ENCODE measurements at regions of chr2 and their contacts with region 1.

Region 1: DNA sequence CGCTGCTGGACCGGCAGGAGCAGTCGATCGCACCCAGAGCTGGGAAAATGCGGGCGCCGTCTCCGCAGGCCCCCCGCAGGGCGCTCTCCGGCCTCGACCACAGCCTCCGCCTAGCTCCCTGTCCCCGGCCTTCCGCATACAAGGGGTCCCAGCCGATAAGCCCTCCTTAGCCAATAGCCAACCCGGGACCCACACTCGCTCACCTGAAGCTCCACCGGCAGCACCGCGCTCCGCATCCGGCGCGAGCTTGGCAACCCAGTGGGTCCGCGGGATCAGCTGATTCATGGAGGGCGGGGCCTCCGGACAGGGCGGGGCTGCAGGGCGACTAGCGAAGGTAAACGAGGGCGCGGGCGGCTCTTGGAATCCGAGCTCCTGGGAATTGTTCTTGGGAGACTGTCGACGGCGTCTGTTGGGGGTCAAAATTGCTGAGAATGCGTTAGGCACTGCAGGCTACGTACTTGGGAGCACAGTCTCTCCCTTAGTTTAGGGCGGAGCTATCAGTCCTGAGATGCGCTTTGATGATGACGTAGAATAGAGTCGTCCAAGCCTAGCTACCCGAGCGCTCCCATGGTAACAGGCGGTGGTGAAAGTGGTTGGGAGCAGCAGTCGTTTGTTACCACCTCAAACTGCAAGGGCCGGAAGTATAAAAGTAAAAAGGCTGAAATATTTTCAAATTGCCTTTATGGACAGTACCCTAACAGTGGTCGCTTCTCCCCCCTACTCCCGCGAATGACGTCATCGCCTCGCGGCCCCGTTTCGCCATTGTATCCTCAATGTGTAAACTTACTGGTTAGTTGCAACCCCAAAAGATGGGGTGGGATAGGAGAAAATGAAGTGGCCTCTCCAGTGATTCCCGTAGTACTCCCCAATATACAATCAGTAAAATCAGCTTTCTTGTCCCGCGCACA is at the start of gene ALS2:
- DNase-seq: peak; percentile 96
- H3K4me3 Mint-ChIP-seq: peak within 1 kb of the TSS; percentile 98
- H3K27ac Mint-ChIP-seq: peak within 1 kb of the TSS; percentile 93
- H3K4me1 Mint-ChIP-seq: peaks cover 15% of the 10 kb centered on the region
- H3K27me3 Mint-ChIP-seq: peaks cover 3% of the 10 kb centered on the region
- total RNA-seq, gene ALS2: 11.0 to 12.6 TPM

Region 2: GRCh38 chr2:201768918-201769317 is 12.0 kb before region 1 on chr2:
- CTCF ChIA-PET with region 1: no interaction called
- POLR2A ChIA-PET with region 1: no interaction called
- intact Hi-C with region 1: no loop called
- DNase-seq: no peak
- H3K4me3 Mint-ChIP-seq: no peak overlapping the region
- H3K27ac Mint-ChIP-seq: no peak overlapping the region
- H3K4me1 Mint-ChIP-seq: peaks cover 1% of the 10 kb centered on the region
- H3K27me3 Mint-ChIP-seq: no peaks in the 10 kb centered on the region

Region 3: GRCh38 chr2:202033321-202034248 is 252.7 kb after region 1 on chr2 and contains the start of gene FZD7:
- CTCF ChIA-PET with region 1: no interaction called
- POLR2A ChIA-PET with region 1: no interaction called
- intact Hi-C with region 1: loop called (anchors 2 kb)
- DNase-seq: peak; percentile 91
- H3K4me3 Mint-ChIP-seq: peak within 1 kb of the TSS; percentile 80
- H3K27ac Mint-ChIP-seq: no peak within 1 kb of the TSS
- H3K4me1 Mint-ChIP-seq: peaks cover 11% of the 10 kb centered on the region
- H3K27me3 Mint-ChIP-seq: peaks cover 19% of the 10 kb centered on the region
- total RNA-seq, gene FZD7: 0.58 to 0.62 TPM